Left lung (tissue), 14 donors: ENCODE measurements at regions of chr11 and their contacts with region 1.

Region 1: GRCh38 chr11:2298795-2299761 is 2.6 kb downstream of the C11orf21 start:
- DNase-seq: peak in 1 of 4 donors; percentile 73
- ATAC-seq: peak; percentile 14
- H3K4me3 ChIP-seq: no peak overlapping the region
- H3K27ac ChIP-seq: peak overlapping the region in 1 of 2 donors; percentile 13
- H3K4me1 ChIP-seq: peaks cover 0 to 38% of the 10 kb centered on the region in 2 donors
- H3K27me3 ChIP-seq: no peaks in the 10 kb centered on the region
- CTCF ChIP-seq: peak; percentile 18 to 46

Region 2: GRCh38 chr11:2196970-2197770 is 101.9 kb before region 1 on chr11:
- intact Hi-C with region 1: loop called in 1 of 2 experiments (anchors 5 kb)
- DNase-seq: peak; percentile 55 to 92 (median 78)
- ATAC-seq: peak; percentile 91
- H3K4me3 ChIP-seq: no peak overlapping the region
- H3K27ac ChIP-seq: no peak overlapping the region
- H3K4me1 ChIP-seq: no peaks in the 10 kb centered on the region
- H3K27me3 ChIP-seq: peaks cover 0 to 14% of the 10 kb centered on the region in 2 donors
- CTCF ChIP-seq: peak; percentile 70 to 88

Region 3: GRCh38 chr11:2234963-2235362 is 64.1 kb before region 1 on chr11:
- intact Hi-C with region 1: no loop called
- DNase-seq: peak in 1 of 4 donors; percentile 54
- ATAC-seq: no peak
- H3K4me3 ChIP-seq: no peak overlapping the region
- H3K27ac ChIP-seq: peak overlapping the region in 1 of 2 donors; percentile 23
- H3K4me1 ChIP-seq: no peaks in the 10 kb centered on the region
- H3K27me3 ChIP-seq: no peaks in the 10 kb centered on the region
- CTCF ChIP-seq: no peak

Region 4: GRCh38 chr11:2355000-2355644 is 56.0 kb after region 1 on chr11:
- intact Hi-C with region 1: no loop called
- DNase-seq: no peak
- ATAC-seq: no peak
- H3K4me3 ChIP-seq: no peak overlapping the region
- H3K27ac ChIP-seq: no peak overlapping the region
- H3K4me1 ChIP-seq: no peaks in the 10 kb centered on the region
- H3K27me3 ChIP-seq: no peaks in the 10 kb centered on the region
- CTCF ChIP-seq: no peak